Activated CD4-positive, alpha-beta T cell treated with anti-CD3 and anti-CD28 coated beads for 36 hours (primary cell): ENCODE measurements at regions of chr17 and their contacts with region 1.

Region 1: DNA sequence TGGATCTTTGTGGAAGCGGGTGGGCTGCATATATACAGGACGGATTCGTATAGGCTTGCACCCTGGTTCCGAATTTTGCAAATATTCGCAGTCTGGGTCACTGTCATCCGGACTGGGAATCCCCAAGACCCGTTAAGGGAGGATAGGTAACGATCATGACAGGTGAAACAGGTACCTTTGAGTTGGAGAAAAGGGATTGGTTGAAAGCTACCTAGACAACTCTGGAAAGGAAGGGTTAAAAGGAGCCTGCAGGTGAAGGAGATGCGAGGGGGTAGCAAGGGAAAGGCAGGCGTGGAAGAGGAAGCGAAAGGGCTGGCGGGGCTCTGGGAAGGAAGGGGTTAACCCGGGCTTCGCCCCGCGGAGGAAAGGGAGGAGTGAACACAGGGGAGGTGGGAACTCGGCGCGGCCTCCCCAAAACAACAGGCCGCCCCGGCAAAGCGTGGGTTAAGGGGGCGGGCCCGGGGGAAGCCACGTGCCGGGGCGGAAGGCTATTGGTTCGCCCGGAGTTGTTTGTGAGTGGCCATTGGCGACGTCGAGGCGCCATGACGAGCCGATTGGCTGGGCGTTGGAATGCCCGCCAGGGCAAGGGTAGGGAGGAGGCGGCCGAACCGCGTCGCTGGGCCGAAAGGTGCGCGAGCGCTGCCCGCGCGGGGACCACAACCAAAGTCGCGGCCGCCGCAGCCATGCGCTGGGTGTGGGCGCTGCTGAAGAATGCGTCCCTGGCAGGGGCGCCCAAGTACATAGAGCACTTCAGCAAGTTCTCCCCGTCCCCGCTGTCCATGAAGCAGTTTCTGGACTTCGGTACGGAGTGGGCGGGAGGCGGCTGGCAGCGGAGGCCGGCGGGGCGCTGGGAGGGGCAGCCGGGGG is at the start of gene PDK2:
- DNase-seq: peak; percentile 97
- ATAC-seq: peak; percentile 93
- H3K4me3 Mint-ChIP-seq: peak within 1 kb of the TSS; percentile 84
- H3K27ac Mint-ChIP-seq: peak within 1 kb of the TSS; percentile 91
- H3K4me1 Mint-ChIP-seq: peaks cover 19% of the 10 kb centered on the region
- H3K27me3 Mint-ChIP-seq: no peaks in the 10 kb centered on the region
- total RNA-seq, gene PDK2: 9.8 to 16.2 TPM

Region 2: DNA sequence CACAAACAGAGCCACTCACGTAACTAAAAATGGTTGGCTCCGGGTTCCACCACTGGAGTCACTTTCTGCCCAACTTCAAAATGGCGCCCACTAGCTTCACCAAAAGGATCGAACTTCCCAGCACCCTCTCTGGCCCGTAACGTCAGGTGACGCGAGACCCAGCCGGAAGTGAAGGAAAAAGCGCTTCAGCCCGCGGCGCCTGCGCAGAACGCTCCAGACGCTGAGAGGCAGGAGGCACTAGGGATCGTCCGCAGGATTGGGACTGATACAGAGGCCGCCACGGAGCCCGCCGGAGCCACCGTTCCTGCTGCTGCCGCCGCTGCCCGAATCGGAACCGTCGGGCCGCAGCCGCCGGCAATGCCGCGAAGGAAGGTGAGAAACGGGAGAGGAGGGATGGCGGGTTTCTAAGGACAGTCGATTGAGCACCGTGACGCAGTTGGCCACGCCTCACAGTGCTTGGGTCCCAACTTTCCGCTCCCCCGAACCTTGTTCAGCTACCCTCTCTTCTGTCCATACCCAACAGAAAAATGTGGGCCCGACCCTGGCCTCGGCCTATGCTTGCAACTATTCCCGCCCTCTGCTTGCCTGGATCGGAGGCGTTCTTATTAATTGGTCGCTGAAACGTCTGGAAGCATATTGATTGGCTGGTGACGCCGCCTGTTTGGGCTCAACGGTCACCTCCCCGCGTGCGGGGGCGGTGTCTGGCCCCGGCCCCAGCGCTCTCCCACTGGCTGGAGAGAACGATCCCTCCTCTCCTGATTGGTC is 306.3 kb before region 1 on chr17 and contains the start of gene KAT7:
- CTCF ChIA-PET with region 1: interaction called, 3 read pairs
- POLR2A ChIA-PET with region 1: no interaction called
- intact Hi-C with region 1: loop called in 1 of 2 experiments (anchors 1 kb)
- DNase-seq: peak; percentile 99
- ATAC-seq: peak; percentile 91
- H3K4me3 Mint-ChIP-seq: peak within 1 kb of the TSS; percentile 89
- H3K27ac Mint-ChIP-seq: peak within 1 kb of the TSS; percentile 98
- H3K4me1 Mint-ChIP-seq: peaks cover 53% of the 10 kb centered on the region
- H3K27me3 Mint-ChIP-seq: no peaks in the 10 kb centered on the region
- total RNA-seq, gene KAT7: 63.5 to 93.0 TPM

Region 3: DNA sequence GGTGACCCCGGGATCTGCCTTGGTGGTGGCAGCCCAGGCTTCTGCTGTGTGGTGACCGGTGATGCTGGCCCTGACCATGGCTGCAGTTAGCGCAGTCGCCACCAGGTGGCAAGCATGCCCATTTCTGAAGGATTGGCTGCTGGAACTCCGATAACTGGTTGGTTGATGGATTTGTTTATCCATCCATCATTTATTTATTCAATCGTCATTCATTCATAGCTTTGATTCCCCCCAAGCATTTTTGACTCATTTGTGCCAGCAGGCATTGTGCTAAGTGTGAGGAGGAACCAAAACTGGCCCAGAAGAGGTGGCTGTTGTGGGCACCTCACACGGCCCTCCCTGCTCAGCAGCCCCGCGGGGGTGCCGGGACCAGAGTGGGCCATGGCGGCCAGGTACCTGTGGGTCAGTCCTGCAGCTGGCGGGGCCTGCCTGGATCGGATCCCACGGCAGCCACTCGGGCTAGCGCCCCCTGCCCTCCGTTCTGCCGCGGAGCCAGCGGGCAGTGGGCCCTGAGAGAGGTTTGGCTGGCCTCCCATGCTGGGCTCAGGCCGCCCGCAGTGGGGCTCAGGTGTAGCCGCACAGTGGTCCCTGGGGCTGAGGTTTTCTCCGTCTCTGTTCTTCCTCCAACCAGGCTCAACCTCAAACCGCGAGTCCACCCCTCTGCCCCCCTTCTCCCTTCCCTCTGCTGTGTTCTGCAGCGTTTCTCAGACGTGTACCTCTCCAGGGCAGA is 67.9 kb before region 1 on chr17:
- CTCF ChIA-PET with region 1: interaction called, 38 read pairs
- POLR2A ChIA-PET with region 1: no interaction called
- intact Hi-C with region 1: loop called in 1 of 2 experiments (anchors 2 kb)
- DNase-seq: peak; percentile 86
- ATAC-seq: peak; percentile 71
- H3K4me3 Mint-ChIP-seq: no peak overlapping the region
- H3K27ac Mint-ChIP-seq: no peak overlapping the region
- H3K4me1 Mint-ChIP-seq: peaks cover 11% of the 10 kb centered on the region
- H3K27me3 Mint-ChIP-seq: peaks cover 25% of the 10 kb centered on the region

Region 4: DNA sequence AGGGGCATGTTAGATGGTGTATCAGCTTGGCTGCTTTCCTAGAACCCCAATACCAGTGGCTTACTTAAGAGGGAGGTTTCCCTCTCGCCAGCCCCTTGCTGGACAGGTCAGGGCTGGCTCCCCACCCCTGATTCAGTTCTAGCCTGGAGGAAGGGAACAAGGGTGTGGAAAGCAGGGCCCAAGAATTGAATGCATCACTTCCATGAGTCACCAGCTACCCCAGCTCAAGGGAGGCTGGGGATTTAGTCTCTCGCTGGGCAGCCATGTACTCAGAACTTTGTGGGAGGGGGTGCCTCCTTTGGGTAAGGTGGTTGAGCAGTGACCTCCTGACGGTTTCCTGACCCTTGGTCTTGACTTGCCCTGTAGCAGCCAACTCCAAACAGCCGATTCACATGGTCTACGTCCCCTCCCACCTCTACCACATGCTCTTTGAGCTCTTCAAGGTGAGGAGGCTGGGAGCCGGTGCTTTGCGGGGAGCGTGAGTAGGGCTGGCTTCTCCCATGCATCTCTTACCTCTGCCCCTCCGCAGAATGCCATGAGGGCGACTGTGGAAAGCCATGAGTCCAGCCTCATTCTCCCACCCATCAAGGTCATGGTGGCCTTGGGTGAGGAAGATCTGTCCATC is 12.9 kb after region 1 on chr17:
- CTCF ChIA-PET with region 1: interaction called, 20 read pairs
- POLR2A ChIA-PET with region 1: no interaction called
- intact Hi-C with region 1: no loop called
- DNase-seq: no peak
- ATAC-seq: no peak
- H3K4me3 Mint-ChIP-seq: no peak overlapping the region
- H3K27ac Mint-ChIP-seq: no peak overlapping the region
- H3K4me1 Mint-ChIP-seq: no peaks in the 10 kb centered on the region
- H3K27me3 Mint-ChIP-seq: no peaks in the 10 kb centered on the region

Region 5: GRCh38 chr17:50151041-50151936 is 56.3 kb after region 1 on chr17:
- CTCF ChIA-PET with region 1: interaction called, 9 read pairs
- POLR2A ChIA-PET with region 1: no interaction called
- intact Hi-C with region 1: loop called (anchors 1 kb)
- DNase-seq: peak; percentile 95
- ATAC-seq: peak; percentile 66
- H3K4me3 Mint-ChIP-seq: peak overlapping the region; percentile 90
- H3K27ac Mint-ChIP-seq: peak overlapping the region; percentile 96
- H3K4me1 Mint-ChIP-seq: peaks cover 40% of the 10 kb centered on the region
- H3K27me3 Mint-ChIP-seq: no peaks in the 10 kb centered on the region

Region 6: GRCh38 chr17:50297407-50297865 is 202.4 kb after region 1 on chr17:
- CTCF ChIA-PET with region 1: interaction called, 18 read pairs
- POLR2A ChIA-PET with region 1: no interaction called
- intact Hi-C with region 1: loop called (anchors 1 to 10 kb)
- DNase-seq: peak; percentile 91
- ATAC-seq: peak; percentile 99
- H3K4me3 Mint-ChIP-seq: no peak overlapping the region
- H3K27ac Mint-ChIP-seq: no peak overlapping the region
- H3K4me1 Mint-ChIP-seq: no peaks in the 10 kb centered on the region
- H3K27me3 Mint-ChIP-seq: peaks cover 3% of the 10 kb centered on the region

Region 7: DNA sequence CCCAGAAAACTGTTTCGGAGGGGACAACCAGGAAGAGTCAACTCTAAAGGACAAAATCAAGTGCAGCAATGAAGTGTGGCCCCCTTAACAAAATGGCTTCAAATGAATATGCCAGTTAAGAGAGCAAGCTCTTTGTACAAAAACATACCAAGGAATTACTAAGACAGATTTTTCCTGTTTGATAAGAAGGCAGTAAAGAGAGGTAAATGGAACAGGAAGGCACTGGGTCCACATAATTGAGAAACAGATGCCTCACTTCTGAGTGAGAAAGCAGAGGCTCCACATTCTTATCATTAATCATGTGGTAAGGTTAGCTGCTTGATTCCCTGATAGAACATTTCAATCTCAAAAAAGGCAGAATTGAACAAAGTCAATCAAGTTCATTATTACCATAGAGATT is 1119.9 kb after region 1 on chr17:
- CTCF ChIA-PET with region 1: no interaction called
- POLR2A ChIA-PET with region 1: no interaction called
- intact Hi-C with region 1: no loop called
- DNase-seq: no peak
- ATAC-seq: no peak
- H3K4me3 Mint-ChIP-seq: no peak overlapping the region
- H3K27ac Mint-ChIP-seq: no peak overlapping the region
- H3K4me1 Mint-ChIP-seq: no peaks in the 10 kb centered on the region
- H3K27me3 Mint-ChIP-seq: no peaks in the 10 kb centered on the region